Activated CD4-positive, alpha-beta T cell treated with anti-CD3 and anti-CD28 coated beads for 36 hours (primary cell): ENCODE measurements at regions of chr2 and their contacts with region 1.

Region 1: DNA sequence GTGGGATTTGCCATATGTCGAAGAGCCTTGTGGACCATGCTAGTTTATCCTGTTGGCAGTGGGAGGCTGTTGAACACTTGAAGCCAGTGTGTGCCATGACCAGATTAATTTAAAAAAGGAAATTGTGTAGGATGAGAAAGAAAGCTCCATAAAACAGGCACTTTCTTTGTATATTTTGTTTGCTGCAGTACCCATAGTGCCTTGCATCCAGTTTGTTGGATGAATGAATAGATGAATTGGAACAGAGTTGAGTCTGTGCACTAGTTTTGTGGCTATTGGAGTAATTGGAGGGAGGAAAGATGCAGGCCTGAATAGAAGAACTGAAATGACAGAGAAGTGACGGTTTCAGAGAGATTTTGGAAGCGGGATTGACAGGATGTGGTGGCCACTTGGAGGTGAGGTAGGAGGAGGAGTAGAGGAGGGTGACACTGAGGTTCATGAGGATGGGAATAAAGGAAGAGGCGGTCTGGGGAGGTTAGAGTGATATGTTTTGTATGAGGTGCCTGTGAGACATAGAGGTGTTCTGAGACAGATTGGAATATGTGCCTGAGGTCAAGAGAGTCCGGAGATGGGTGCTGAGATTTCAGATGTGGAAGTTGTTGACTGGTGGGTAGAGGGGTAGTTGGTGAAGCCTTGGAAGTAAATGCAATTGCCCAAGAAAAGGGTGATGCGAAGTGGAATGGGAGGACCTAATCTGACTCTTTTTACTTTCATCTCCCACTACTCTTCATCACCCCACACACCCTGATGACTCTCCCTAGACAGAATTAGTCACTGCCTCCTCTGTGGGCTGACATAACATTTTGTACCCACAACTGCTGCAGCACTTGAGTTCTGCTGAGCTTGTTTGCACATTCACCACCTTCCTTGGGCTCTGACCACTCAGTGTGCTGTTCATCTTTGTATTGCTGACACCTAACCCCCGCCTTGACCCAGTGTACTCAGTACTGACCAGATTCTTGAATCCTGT is 5.1 kb downstream of the DGUOK start:
- DNase-seq: peak; percentile 76
- ATAC-seq: peak; percentile 93
- H3K4me3 Mint-ChIP-seq: peak overlapping the region; percentile 24
- H3K27ac Mint-ChIP-seq: peak overlapping the region; percentile 68
- H3K4me1 Mint-ChIP-seq: peaks cover 76% of the 10 kb centered on the region
- H3K27me3 Mint-ChIP-seq: no peaks in the 10 kb centered on the region

Region 2: DNA sequence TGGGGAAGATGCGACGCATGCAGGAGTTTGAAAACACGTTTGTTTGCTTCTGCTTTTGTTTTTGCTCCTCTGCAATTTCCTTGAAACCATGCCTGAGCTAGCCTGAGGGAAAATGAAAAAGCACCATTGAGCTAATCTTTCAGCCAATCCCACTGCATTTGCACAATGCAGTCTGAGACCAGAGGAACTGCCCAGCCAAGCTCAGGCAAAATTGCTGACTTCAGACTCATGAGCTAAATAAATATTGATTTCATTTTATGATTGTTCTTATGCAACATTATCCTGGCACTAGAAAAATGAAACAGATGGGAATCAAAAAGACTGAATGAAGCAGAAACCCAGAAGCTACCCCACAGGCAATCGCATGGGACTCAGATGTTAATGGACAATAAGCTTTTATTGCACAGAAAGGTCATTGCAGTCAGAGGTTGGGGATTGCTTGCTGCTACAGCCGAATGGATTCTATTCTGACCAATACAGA is 231.6 kb before region 1 on chr2:
- CTCF ChIA-PET with region 1: no interaction called
- POLR2A ChIA-PET with region 1: no interaction called
- intact Hi-C with region 1: no loop called
- DNase-seq: no peak
- ATAC-seq: no peak
- H3K4me3 Mint-ChIP-seq: no peak overlapping the region
- H3K27ac Mint-ChIP-seq: no peak overlapping the region
- H3K4me1 Mint-ChIP-seq: no peaks in the 10 kb centered on the region
- H3K27me3 Mint-ChIP-seq: peaks cover 7% of the 10 kb centered on the region

Region 3: DNA sequence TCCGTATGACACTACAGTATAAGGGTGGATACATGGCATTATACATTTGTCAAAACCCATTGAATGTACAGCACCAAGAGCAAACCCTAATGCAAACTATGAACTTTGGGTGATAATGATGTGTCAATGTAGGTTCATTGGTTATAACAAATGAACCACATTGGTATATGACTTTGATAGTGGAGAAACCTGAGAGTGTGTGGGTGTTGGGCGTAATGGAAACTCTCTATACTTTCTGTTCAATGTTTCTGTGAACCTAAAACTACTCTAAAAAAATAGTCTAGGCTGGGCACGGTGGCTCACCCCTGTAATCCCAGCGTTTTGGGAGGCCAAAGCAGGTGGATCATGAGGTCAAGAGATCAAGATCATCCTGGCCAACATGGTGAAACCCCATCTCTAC is 45.5 kb before region 1 on chr2:
- CTCF ChIA-PET with region 1: no interaction called
- POLR2A ChIA-PET with region 1: no interaction called
- intact Hi-C with region 1: loop called (anchors 2 to 5 kb)
- DNase-seq: peak; percentile 79
- ATAC-seq: peak; percentile 90
- H3K4me3 Mint-ChIP-seq: no peak overlapping the region
- H3K27ac Mint-ChIP-seq: peak overlapping the region; percentile 78
- H3K4me1 Mint-ChIP-seq: peaks cover 25% of the 10 kb centered on the region
- H3K27me3 Mint-ChIP-seq: peaks cover 6% of the 10 kb centered on the region

Region 4: DNA sequence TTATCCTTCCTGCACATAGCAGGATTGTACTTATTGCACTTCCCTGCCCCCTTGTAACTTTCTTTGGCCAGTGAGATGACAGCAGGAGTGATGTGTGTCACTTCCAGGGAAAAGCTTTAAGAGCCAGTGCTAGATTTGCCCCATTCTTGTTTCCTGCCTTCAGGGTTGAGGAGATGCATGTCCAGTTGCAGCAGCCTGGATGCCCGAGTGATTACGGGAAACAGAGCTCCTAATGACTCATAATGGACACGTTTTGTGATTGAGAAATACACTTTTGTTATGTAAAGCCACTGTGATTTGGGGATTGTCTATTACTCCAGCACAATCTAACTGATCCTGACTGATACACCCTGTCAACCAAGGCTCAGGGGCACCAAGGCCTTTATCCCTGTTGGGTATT is 47.9 kb after region 1 on chr2:
- CTCF ChIA-PET with region 1: no interaction called
- POLR2A ChIA-PET with region 1: no interaction called
- intact Hi-C with region 1: loop called in 1 of 2 experiments (anchors 2 kb)
- DNase-seq: no peak
- ATAC-seq: peak; percentile 8
- H3K4me3 Mint-ChIP-seq: peak overlapping the region; percentile 68
- H3K27ac Mint-ChIP-seq: peak overlapping the region; percentile 91
- H3K4me1 Mint-ChIP-seq: peaks cover 80% of the 10 kb centered on the region
- H3K27me3 Mint-ChIP-seq: no peaks in the 10 kb centered on the region